SK-MEL-5 (cell line): ENCODE measurements at regions of chr2 and their contacts with region 1.

Region 1: DNA sequence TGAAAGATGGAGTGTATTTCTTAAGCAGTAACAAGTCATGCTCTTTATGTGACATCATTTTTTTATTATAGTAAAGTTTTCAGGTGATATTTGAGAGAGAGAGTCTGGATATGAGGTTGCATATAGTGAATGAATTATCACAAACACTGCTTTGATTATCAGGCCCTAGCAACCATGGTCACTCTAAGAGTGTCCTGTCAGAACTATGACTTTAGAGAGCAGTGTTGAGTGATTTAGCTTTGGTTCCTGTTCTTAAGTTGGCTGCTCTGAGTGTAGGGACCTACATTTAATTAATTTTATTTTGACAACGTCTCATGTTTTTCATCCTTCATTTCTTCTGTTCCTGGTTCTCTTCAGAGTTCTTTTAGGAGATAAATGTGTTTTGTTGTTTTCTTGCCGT is 275.5 kb downstream of the KCNJ3 start:
- DNase-seq: peak; percentile 56

Region 2: DNA sequence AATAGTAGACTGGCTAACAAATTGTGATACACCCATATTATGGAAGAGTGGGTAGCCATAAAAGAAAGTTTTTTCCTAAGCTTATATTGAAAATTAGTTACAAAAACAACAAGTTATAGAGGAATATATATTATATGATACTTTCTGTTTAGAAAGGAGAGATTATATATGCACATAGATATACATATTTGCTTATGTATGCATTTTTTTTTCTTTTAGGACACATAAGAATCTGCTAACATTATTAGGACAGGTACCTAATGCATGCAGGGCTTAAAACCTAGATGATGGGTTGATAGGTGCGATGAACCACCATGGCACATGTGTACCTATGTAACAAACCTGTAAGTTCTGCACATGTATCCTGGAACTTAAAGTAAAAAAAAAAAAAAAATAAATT is 455.2 kb before region 1 on chr2:
- in situ Hi-C with region 1: no loop called
- DNase-seq: no peak

Region 3: DNA sequence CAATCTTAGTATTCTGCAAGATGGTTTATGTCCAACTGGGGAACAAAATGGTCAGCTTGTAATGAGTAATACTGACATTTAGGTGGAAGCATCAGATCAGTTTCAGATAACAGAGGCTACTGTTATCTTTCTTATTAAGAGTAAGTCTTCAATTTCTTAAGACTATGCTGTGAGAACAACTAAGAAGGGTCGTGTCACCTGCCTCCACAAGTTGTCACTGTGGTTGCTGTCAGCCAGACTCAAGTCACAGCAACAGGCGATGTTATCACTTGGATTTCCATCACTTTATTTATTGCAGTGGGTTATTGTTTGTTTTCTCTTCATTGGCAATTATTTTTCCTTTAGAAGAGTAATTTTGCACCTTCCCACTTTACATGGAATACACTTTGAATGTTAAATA is 69.6 kb after region 1 on chr2:
- in situ Hi-C with region 1: loop called (anchors 10 kb)
- DNase-seq: no peak